ENCODE measurements at regions of chr5 and their contacts with region 1.

Region 1: GRCh38 chr5:82387001-82387818 is 109.1 kb upstream of the RPS23 start:
- DNase-seq: peak; percentile 58 to 92
- ATAC-seq: peak; percentile 89 to 90
- H3K4me3 ChIP-seq: no peak overlapping the region
- H3K27ac ChIP-seq: peak overlapping the region; percentile 66 to 81; a peak in 5 of 6 replicates
- H3K4me1 ChIP-seq: peaks cover 30% of the 10 kb centered on the region
- CTCF ChIP-seq: no peak
- EP300 ChIP-seq: peak; percentile 88 to 92; a peak in 4 of 5 replicates
- POLR2A ChIP-seq: no peak
- RAD21 ChIP-seq: peak in 1 of 2 experiments; percentile 52; a peak in 2 of 5 replicates

Region 2: GRCh38 chr5:82351754-82352145 is 35.5 kb before region 1 on chr5:
- CTCF ChIA-PET with region 1: interaction called, 15 read pairs
- POLR2A ChIA-PET with region 1: interaction called, 10 read pairs
- DNase-seq: peak; percentile 55 to 60
- ATAC-seq: peak; percentile 86 to 94
- H3K4me3 ChIP-seq: no peak overlapping the region
- H3K27ac ChIP-seq: peak overlapping the region in 1 of 2 experiments; percentile 36; a peak in 3 of 6 replicates
- H3K4me1 ChIP-seq: peaks cover 7% of the 10 kb centered on the region; the same call in 1 of the 3 replicates
- CTCF ChIP-seq: peak; percentile 89
- EP300 ChIP-seq: no peak
- POLR2A ChIP-seq: no peak
- RAD21 ChIP-seq: peak; percentile 89 to 91

Region 3: DNA sequence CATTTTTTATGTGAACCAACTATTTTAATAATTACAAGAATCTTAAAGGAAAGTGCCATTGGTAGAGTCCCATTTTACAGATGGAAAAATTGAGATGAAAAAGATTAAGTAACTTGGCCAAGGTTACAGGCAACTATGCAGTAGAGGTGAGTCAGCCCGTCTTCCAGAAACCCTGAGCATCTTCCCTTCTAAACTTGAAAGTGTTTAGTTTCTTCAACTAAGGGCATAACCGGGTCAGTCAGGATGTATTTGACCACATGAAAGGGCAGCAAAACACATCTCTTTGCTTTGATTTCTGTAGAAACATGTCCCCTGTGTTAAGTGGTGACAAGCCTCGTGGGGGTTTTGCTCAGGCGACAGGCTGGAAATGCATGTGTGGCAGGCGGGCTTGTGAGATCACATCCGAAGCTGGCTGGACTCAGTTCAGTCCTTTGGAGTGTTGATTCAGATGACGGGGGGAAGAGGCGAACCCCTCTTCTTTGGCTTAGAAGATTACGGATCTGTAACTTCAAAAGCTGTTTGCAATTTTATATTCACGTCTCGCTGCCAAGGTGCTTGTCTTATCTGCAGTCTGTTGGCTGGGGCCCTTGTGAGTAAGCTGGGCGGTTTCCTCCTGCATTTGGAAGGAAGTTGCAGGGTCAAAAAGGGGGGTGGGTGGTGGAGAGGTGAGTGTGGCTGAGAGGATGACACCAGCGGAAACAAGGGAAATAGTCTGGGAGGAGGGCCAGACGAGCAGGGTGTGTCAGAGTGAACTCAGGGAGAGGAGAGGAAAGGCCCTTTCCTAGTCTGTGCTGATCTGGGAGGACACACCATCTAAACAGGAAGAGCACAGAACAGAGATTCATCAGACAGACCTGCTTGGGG is 30.2 kb before region 1 on chr5:
- CTCF ChIA-PET with region 1: interaction called, 15 read pairs
- POLR2A ChIA-PET with region 1: interaction called, 10 read pairs
- DNase-seq: peak; percentile 32 to 85
- ATAC-seq: peak; percentile 89 to 97
- H3K4me3 ChIP-seq: no peak overlapping the region
- H3K27ac ChIP-seq: peak overlapping the region; percentile 67 to 77
- H3K4me1 ChIP-seq: peaks cover 19% of the 10 kb centered on the region; the same call in 2 of the 3 replicates
- CTCF ChIP-seq: no peak
- EP300 ChIP-seq: peak; percentile 74 to 81; a peak in 4 of 5 replicates
- POLR2A ChIP-seq: no peak
- RAD21 ChIP-seq: peak in 1 of 2 experiments; percentile 34; a peak in 1 of 5 replicates